ENCODE measurements at regions of chr17 and their contacts with region 1.

Region 1: DNA sequence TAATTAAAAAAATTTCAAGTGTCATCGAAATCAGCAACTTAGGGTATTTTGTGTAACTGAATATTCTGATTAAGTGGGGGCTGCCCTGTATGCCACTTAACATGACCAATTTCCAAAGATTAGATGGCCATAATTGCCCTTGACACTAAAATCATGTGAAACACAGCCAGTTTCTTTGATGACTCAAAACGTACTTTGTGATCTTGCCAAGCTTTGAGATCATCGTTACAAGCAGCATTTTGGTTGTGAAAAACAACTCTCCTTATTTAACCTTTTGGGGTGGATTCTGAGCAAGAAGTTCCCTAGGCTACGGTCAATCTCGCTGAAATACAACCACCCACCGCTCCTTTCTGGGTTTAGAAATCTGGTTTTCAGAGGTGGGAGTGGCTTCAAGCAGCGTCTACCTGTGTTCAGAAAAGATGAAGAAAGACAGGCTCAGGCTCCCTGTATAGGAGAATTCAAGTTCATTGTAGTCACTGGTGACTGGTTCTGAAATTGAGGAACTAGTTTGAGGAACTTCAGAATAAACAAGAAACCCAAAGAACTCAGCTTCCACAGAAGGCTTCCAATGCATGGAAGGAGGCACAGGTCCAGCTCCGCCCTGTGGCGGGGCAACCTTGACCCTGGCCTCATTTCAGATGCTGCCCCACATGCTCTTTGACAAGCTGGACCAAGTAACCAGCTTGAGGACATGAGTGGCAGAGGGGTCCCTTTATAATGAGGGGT is 9.4 kb downstream of the MAP3K14 start:
- DNase-seq: peak; percentile 78
- ATAC-seq: peak; percentile 56
- H3K4me3 Mint-ChIP-seq: peak overlapping the region; percentile 44
- H3K27ac Mint-ChIP-seq: peak overlapping the region; percentile 97
- H3K4me1 Mint-ChIP-seq: peaks cover 89% of the 10 kb centered on the region
- H3K27me3 Mint-ChIP-seq: no peaks in the 10 kb centered on the region

Region 2: DNA sequence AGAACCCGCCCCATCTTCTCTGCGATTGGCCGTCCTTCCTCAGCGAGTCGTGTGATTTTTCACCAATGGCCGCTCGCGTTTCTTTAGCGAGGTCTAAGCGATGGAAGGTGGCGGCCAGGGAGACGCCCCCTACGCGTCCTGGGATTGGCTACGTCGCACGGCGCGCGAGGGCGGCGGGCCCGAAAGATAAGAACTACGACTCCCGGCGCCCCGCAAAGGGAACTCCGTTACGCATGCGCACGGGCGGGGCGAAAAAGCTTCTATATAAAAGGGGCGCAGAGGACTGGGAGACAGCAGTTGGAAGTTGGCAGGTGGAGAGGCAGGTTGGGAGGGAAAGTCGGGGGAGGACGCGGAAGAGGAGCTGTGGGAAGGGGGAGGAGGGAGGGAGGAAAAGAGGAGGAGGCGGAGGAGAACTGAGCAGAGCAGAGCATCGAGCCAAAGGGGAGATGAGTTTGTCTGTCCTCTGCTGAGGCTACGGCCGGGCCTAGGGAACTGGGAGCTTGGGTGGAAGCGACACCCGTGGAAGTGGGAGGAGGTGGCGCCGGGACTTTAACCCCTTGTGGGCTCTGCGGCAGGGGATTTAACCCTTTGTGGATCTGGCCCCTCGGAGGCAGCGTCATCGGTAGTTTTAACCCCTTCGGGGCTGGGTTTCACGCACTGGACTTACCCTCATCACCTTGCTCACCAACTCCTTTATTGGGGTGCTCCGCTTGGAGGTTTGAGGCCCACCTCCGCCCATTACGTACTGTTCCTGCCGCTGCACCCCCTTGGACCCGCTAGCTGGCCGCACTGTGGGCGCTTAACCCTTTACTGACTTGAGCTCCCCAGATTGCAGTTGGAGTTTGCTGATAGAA is 159.0 kb before region 1 on chr17 and contains the start of gene HEXIM1:
- CTCF ChIA-PET with region 1: interaction called, 7 read pairs
- POLR2A ChIA-PET with region 1: interaction called, 38 read pairs
- intact Hi-C with region 1: loop called in 1 of 2 experiments (anchors 2 kb)
- DNase-seq: peak; percentile 99
- ATAC-seq: peak; percentile 78
- H3K4me3 Mint-ChIP-seq: peak within 1 kb of the TSS; percentile 99
- H3K27ac Mint-ChIP-seq: peak within 1 kb of the TSS; percentile 100
- H3K4me1 Mint-ChIP-seq: peaks cover 37% of the 10 kb centered on the region
- H3K27me3 Mint-ChIP-seq: no peaks in the 10 kb centered on the region
- total RNA-seq, gene HEXIM1: 27.1 to 27.3 TPM

Region 3: DNA sequence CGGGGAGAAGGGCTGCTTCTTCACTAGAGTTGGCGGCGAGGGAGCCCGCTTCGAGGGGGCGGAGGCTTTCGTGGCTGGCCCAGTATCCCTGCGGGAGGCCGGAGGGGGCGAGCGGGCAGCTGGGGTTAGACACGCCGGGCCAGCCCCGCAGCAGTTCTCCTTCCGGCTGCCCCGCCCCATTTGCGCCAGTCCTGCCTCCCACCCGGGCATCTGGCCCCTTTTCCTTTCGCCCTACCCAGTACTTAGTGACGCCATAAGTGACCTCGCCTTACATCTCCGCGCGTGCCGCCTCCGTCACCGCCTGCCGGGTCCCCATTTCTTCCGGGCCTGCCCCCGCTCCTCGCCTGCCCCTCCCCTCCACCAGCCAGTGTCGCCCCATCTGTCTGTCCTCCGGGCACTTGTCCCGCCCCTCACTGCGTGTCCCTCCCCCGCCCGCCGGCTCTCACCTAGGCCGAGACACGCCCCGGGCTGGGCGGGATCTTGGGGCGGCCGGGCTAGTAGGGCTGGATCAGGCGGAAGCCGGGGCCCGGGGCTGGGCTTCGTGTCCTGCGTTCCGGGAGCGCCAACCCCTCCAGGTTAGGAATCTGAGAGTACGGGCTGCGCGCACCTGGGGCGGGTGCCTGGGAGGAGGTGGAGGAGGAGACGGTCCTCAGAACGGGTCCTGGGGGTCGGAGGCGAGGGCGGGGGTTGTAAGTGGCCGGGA is 59.9 kb before region 1 on chr17:
- CTCF ChIA-PET with region 1: interaction called, 5 read pairs
- POLR2A ChIA-PET with region 1: interaction called, 9 read pairs
- intact Hi-C with region 1: loop called in 1 of 2 experiments (anchors 1 kb)
- DNase-seq: peak; percentile 99
- ATAC-seq: peak; percentile 89
- H3K4me3 Mint-ChIP-seq: peak overlapping the region; percentile 83
- H3K27ac Mint-ChIP-seq: peak overlapping the region; percentile 92
- H3K4me1 Mint-ChIP-seq: peaks cover 57% of the 10 kb centered on the region
- H3K27me3 Mint-ChIP-seq: no peaks in the 10 kb centered on the region

Region 4: DNA sequence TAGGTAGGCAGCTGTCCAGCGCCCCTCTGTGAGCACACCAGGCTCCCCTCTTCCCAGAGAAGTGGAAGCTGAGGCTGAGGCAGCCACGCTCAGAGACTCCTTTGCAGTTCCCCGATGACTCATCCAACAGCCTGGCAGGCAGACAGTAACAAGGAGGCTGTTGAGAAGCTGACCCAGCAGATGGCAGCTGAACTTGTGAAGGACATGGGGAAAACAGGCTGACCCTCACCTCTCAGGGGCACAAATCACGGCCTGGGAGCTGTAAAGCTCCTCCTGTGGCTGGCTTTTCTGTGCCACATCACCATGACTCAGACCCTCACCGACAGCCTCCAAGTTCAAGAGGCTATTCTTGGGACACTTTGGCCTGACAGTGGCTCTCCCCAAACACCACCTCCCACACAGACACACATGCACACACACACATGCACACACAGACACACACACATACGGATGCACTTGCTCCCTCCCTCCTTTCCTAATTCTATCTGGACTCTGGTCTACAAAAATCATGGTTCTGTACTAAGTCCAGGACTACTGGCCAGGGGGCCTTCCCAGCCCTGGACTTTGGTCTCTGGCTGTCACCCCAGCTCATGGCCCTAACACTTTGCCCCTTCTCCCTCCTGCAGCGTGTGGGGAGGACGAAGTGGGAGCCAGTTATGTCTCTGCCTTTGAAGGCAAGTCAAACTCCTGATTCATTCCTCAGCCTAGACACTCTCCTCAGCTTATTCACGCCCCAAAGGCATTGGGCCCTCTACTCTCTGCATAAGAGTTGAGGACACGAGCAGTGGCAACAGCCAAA is 13.8 kb before region 1 on chr17:
- CTCF ChIA-PET with region 1: interaction called, 15 read pairs
- POLR2A ChIA-PET with region 1: interaction called, 9 read pairs
- intact Hi-C with region 1: no loop called
- DNase-seq: peak; percentile 60
- ATAC-seq: peak; percentile 75
- H3K4me3 Mint-ChIP-seq: no peak overlapping the region
- H3K27ac Mint-ChIP-seq: peak overlapping the region; percentile 71
- H3K4me1 Mint-ChIP-seq: peaks cover 61% of the 10 kb centered on the region
- H3K27me3 Mint-ChIP-seq: no peaks in the 10 kb centered on the region

Region 5: GRCh38 chr17:45367216-45367615 is 59.8 kb after region 1 on chr17:
- CTCF ChIA-PET with region 1: no interaction called
- POLR2A ChIA-PET with region 1: no interaction called
- intact Hi-C with region 1: no loop called
- DNase-seq: no peak
- ATAC-seq: no peak
- H3K4me3 Mint-ChIP-seq: no peak overlapping the region
- H3K27ac Mint-ChIP-seq: no peak overlapping the region
- H3K4me1 Mint-ChIP-seq: peaks cover 14% of the 10 kb centered on the region
- H3K27me3 Mint-ChIP-seq: peaks cover 15% of the 10 kb centered on the region

Region 6: DNA sequence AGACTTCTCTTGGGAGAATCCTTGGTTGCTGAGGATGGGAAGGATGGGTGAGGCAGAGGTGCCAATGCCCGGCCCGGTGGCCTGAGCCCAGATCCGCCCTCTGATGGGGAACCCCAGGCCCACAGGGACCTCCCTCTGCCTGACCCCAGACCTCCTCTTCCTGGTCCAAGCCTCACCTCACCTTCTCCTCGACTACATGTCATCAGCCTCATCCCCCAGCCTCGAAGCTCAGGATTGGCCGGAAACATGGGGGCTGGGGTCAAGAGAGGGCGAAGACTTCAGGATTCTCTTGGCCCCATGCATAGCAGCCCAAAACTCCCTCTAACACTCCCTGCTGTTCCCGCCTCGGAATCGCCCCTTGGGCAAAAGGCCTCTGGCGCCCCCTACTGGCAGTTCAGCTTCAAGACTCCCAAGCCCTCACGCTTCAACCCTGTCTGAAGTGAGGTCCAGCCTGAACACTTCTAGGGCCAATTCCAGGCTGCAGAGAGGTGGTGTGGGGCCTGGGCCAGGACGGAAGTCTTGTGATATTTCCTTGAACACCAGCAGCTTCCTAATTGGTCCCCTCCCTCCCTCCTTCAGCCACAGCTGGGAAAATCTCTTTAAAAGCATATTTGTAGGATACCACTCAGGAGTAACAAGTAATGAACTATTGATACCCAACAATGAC is 78.0 kb after region 1 on chr17:
- CTCF ChIA-PET with region 1: interaction called, 19 read pairs
- POLR2A ChIA-PET with region 1: interaction called, 3 read pairs
- intact Hi-C with region 1: no loop called
- DNase-seq: peak; percentile 96
- ATAC-seq: peak; percentile 96
- H3K4me3 Mint-ChIP-seq: no peak overlapping the region
- H3K27ac Mint-ChIP-seq: peak overlapping the region; percentile 71
- H3K4me1 Mint-ChIP-seq: peaks cover 14% of the 10 kb centered on the region
- H3K27me3 Mint-ChIP-seq: peaks cover 4% of the 10 kb centered on the region